Activated CD8-positive, alpha-beta T cell treated with anti-CD3 and anti-CD28 coated beads for 36 hours (primary cell): ENCODE measurements at regions of chr21 and their contacts with region 1.

Region 1: GRCh38 chr21:45130324-45130774 is 56.0 kb downstream of the ADARB1 start:
- DNase-seq: no peak
- ATAC-seq: no peak
- H3K4me3 Mint-ChIP-seq: no peak overlapping the region
- H3K27ac Mint-ChIP-seq: no peak overlapping the region
- H3K4me1 Mint-ChIP-seq: peaks cover 29% of the 10 kb centered on the region
- H3K27me3 Mint-ChIP-seq: no peaks in the 10 kb centered on the region
- CTCF ChIP-seq: no peak

Region 2: DNA sequence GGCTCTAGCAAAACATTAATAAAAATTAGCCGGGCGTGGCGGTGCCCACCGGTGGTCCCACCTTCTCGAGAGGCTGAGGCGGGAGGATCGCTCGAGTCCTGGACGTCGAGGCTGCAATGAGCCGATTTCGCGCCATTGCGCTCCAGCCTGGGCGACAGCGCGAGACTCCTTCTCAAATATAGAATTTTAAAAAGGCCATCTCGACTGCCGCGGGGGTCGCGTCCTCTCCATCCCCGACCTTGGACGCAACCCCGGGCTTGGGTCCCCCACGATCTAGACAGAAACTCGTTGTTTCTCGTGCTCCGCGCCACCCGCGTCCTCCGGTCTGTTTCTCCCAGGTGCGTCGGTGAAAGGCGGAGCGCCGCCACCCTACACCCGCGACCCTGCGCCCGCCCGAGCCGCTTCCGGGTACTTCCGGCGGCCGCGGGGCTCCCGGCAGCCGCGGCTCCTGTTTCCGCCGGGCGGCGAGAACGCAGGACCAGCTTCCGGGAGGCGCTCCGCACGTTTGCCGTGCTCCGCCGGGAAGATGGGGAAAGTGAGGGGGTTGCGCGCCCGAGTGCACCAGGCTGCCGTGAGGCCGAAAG is 190.7 kb before region 1 on chr21 and contains the start of gene SLX9:
- CTCF ChIA-PET with region 1: interaction called, 170 read pairs
- POLR2A ChIA-PET with region 1: interaction called, 3 read pairs
- intact Hi-C with region 1: no loop called
- DNase-seq: peak; percentile 83
- ATAC-seq: peak; percentile 96
- H3K4me3 Mint-ChIP-seq: peak within 1 kb of the TSS; percentile 91
- H3K27ac Mint-ChIP-seq: peak within 1 kb of the TSS; percentile 92
- H3K4me1 Mint-ChIP-seq: peaks cover 43% of the 10 kb centered on the region
- H3K27me3 Mint-ChIP-seq: no peaks in the 10 kb centered on the region
- CTCF ChIP-seq: no peak
- total RNA-seq, gene SLX9: 76.0 to 76.5 TPM

Region 3: DNA sequence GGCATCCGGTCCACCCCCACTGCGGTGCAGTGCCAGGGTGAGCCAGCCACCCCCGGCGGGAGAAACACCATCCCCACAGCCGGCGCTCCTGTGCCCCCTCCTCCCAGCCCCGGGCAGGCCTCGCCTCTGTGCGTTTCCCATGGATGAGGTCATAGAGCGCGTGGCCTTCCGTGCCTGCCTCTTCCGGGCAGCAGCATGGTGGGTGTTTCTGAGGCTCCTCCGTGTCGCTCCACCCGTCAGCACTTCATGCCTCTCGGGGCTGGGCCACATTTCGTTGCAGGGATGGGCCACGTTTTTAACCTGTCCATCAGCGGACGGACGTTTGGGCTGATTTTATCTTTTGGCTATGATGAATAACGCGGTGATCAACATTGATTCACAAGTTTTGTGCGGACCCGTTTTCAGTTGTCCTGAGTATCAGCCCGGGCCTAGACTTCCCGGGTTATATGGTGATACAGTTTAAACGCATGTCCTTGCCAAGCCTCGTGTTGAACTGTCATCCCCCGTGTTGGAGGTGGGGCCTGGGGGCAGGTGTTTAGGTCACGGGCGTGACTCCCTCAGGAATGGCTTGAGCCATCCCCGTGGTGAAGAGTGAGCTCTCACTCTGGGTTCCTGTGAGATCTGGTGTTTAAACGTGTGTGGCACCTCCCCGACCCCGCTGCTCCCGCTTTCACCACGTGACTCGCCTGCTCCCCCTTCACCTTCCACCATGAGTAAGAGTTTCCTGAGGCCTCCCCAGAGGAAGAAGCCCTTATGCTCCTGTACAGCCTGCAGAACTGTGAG is 125.7 kb before region 1 on chr21:
- CTCF ChIA-PET with region 1: interaction called, 14 read pairs
- POLR2A ChIA-PET with region 1: interaction called, 4 read pairs
- intact Hi-C with region 1: no loop called
- DNase-seq: peak; percentile 65
- ATAC-seq: peak; percentile 84
- H3K4me3 Mint-ChIP-seq: no peak overlapping the region
- H3K27ac Mint-ChIP-seq: no peak overlapping the region
- H3K4me1 Mint-ChIP-seq: peaks cover 8% of the 10 kb centered on the region
- H3K27me3 Mint-ChIP-seq: peaks cover 17% of the 10 kb centered on the region
- CTCF ChIP-seq: no peak

Region 4: GRCh38 chr21:45067462-45068285 is 62.7 kb before region 1 on chr21:
- CTCF ChIA-PET with region 1: interaction called, 17 read pairs
- POLR2A ChIA-PET with region 1: no interaction called
- intact Hi-C with region 1: loop called (anchors 10 kb)
- DNase-seq: no peak
- ATAC-seq: no peak
- H3K4me3 Mint-ChIP-seq: no peak overlapping the region
- H3K27ac Mint-ChIP-seq: no peak overlapping the region
- H3K4me1 Mint-ChIP-seq: no peaks in the 10 kb centered on the region
- H3K27me3 Mint-ChIP-seq: no peaks in the 10 kb centered on the region
- CTCF ChIP-seq: no peak

Region 5: DNA sequence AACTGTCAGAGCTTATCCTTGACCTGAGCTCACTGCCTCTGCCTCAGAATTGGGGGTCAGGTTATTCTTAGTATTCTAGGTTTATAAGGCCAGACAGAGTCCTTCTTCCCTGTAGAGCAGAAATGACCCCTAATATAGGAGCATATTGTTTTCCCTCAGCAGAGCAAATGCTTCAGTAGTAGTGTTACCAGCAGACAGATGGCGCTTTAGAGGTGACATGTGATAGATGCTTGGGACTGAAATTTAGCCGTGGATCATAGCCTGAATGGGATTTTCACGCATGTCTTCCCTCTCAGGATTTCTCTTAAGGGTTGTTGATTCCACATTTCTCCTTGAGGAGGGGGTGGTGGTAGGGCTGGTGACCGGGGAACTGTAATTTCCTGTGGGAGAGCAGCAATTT is 31.5 kb before region 1 on chr21:
- CTCF ChIA-PET with region 1: interaction called, 42 read pairs
- POLR2A ChIA-PET with region 1: no interaction called
- intact Hi-C with region 1: no loop called
- DNase-seq: no peak
- ATAC-seq: no peak
- H3K4me3 Mint-ChIP-seq: no peak overlapping the region
- H3K27ac Mint-ChIP-seq: no peak overlapping the region
- H3K4me1 Mint-ChIP-seq: peaks cover 26% of the 10 kb centered on the region
- H3K27me3 Mint-ChIP-seq: no peaks in the 10 kb centered on the region
- CTCF ChIP-seq: peak; percentile 31